Heart right ventricle (tissue), 16 donors: ENCODE measurements at regions of chr10 and their contacts with region 1.

Region 1: DNA sequence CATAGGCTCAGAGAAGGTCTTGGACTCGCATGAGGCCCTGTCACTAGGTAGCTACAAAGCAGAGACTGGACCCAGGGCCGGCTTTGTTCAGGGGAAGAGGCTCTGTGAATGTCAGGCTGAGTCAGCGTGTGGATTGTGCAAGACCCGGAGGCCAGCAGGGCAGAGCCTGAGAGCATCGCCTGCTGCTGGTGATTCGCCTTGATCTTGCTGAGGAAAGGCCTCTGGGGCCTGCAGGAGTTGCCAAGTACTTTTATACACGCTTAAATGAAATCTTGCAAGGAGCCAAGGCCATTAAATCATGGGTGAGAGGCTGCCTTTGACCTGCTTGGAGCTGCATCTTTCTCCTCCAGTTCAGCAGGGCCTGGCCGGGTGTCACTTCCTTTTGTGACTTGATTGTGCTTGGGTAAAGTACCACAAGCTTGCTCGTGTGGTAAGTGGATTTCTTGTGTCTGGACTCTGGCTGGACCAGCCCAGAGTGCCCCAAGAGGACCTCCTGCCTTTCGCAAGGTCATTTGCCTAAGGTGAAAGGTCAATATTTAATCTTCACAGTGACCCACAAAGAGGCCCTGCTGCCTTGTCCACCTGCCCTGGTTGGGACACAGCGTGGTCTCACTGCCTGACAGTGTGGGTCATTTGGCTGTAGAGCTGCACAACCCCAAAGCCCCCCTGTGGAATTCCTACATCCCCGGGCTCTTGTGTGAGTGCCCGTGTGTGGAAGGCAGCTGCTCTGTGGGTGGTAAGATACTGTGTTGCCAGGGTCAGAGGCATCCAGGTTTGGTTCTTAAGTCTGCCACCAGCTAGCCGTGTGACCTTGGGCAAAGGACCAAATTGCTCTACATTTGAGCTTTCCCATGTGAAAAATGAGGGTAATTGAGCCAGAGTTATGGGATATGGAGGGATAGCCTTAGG is 38.6 kb upstream of the SH2D4B start:
- DNase-seq: peak; percentile 82 to 88
- ATAC-seq: peak; percentile 77 to 92 (median 84)
- H3K4me3 ChIP-seq: peak overlapping the region in 1 of 10 donors; percentile 10
- H3K27ac ChIP-seq: peak overlapping the region; percentile 58 to 92 (median 82)
- H3K4me1 ChIP-seq: peaks cover 49 to 100% (median 91%) of the 10 kb centered on the region in 9 donors
- H3K27me3 ChIP-seq: no peaks in the 10 kb centered on the region
- CTCF ChIP-seq: no peak

Region 2: DNA sequence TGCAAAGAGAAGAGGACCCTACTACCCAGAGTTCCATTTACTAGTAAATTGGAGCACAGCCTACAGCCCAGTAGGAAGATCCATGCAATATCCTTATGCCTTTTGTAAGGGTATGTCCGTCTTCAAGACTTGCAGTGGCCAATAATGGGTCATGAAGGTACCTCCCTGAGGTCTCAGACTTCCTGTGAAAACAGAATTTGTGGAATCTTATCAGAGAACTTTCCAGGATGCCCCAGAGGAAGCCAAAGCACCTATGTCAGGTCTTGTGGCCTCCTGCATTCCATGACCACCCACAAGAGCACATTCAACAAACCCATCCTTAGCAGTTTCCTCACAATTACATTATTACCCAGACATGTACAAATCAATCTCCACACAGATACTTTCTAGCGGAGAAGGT is 109.3 kb before region 1 on chr10:
- intact Hi-C with region 1: loop called in 2 of 10 experiments (anchors 2 to 5 kb)
- DNase-seq: no peak
- ATAC-seq: no peak
- H3K4me3 ChIP-seq: no peak overlapping the region
- H3K27ac ChIP-seq: peak overlapping the region in 3 of 10 donors; percentile 60 to 79 (median 70)
- H3K4me1 ChIP-seq: peaks cover 0 to 33% (median 13%) of the 10 kb centered on the region in 9 donors
- H3K27me3 ChIP-seq: no peaks in the 10 kb centered on the region
- CTCF ChIP-seq: no peak

Region 3: GRCh38 chr10:80459047-80459931 is 39.8 kb before region 1 on chr10:
- intact Hi-C with region 1: loop called in 3 of 10 experiments (anchors 2 to 5 kb)
- DNase-seq: peak; percentile 53 to 66
- ATAC-seq: peak in 7 of 8 donors; percentile 8 to 39 (median 25)
- H3K4me3 ChIP-seq: peak overlapping the region in 8 of 10 donors; percentile 2 to 97 (median 21)
- H3K27ac ChIP-seq: peak overlapping the region in 9 of 10 donors; percentile 65 to 100 (median 84)
- H3K4me1 ChIP-seq: peaks cover 28 to 93% (median 90%) of the 10 kb centered on the region in 9 donors
- H3K27me3 ChIP-seq: no peaks in the 10 kb centered on the region
- CTCF ChIP-seq: peak in 2 of 9 donors; percentile 5 to 8

Region 4: DNA sequence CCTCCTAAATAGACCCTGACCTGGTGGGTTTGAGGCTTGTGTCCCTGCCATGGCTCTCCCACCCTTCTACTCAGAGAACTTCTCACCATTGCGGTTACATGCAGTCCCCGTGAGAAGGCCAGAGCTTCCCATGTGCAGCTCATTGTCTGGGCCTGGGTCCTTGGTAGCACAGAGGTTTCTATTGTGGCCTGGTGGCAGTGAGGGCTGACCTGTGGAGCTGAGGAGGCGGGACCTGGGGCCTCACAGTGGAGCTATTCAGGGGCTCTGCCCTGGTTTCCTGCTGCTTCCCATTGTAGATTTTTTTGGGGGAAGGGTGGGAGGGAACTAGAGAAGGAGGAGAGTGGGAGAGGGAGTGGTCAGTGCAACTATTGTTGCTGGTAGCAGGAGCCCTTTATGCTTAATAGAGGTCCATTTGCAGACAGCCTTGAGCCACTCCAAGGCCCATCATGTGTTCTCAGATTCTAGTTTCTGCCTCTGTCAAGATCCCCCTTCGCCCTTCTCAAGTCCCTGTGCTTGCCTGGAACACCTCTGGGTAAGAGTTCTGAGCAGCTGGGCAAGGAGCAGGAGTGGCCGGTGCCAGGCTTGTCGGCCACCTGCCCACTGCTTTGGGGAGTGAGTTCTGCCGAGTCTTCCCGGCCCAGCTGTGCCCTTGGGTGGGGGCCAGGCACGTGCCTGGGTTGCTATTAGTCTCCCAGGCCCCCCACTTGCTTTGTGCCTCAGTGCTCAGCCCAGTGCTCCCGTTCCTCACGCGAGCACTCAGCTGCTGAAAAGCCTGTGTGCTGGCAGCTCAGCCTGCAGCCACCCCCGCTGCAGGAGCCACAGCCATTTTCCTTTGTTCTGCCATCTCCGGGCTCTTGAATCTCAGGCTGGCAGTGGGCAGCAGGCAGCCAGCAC is 34.3 kb before region 1 on chr10:
- intact Hi-C with region 1: loop called in 3 of 10 experiments (anchors 1 to 5 kb)
- DNase-seq: peak; percentile 35 to 58
- ATAC-seq: peak; percentile 13 to 61 (median 52)
- H3K4me3 ChIP-seq: peak overlapping the region; percentile 0 to 50 (median 26)
- H3K27ac ChIP-seq: peak overlapping the region; percentile 54 to 100 (median 82)
- H3K4me1 ChIP-seq: peaks cover 39 to 100% (median 100%) of the 10 kb centered on the region in 9 donors
- H3K27me3 ChIP-seq: no peaks in the 10 kb centered on the region
- CTCF ChIP-seq: no peak

Region 5: GRCh38 chr10:80702143-80702542 is 203.1 kb after region 1 on chr10:
- intact Hi-C with region 1: no loop called
- DNase-seq: peak; percentile 14 to 42
- ATAC-seq: peak; percentile 39 to 70 (median 56)
- H3K4me3 ChIP-seq: no peak overlapping the region
- H3K27ac ChIP-seq: no peak overlapping the region
- H3K4me1 ChIP-seq: peaks cover 0 to 14% (median 8%) of the 10 kb centered on the region in 9 donors
- H3K27me3 ChIP-seq: peaks cover 0 to 3% (median 0%) of the 10 kb centered on the region in 7 donors
- CTCF ChIP-seq: no peak